ENCODE measurements at regions of chr12 and their contacts with region 1.

Region 1: GRCh38 chr12:116737774-116738700 is at the starts of genes RNFT2 and SPRING1:
- DNase-seq: peak; percentile 97
- ATAC-seq: peak; percentile 97
- H3K4me3 Mint-ChIP-seq: peak within 1 kb of the TSS; percentile 99
- H3K27ac Mint-ChIP-seq: peak within 1 kb of the TSS; percentile 90
- H3K4me1 Mint-ChIP-seq: peaks cover 31% of the 10 kb centered on the region
- H3K27me3 Mint-ChIP-seq: no peaks in the 10 kb centered on the region
- CTCF ChIP-seq: no peak
- total RNA-seq, gene RNFT2: 7.5 and 8.7 TPM in 2 replicates
- total RNA-seq, gene SPRING1: 31.6 and 36.4 TPM in 2 replicates

Region 2: DNA sequence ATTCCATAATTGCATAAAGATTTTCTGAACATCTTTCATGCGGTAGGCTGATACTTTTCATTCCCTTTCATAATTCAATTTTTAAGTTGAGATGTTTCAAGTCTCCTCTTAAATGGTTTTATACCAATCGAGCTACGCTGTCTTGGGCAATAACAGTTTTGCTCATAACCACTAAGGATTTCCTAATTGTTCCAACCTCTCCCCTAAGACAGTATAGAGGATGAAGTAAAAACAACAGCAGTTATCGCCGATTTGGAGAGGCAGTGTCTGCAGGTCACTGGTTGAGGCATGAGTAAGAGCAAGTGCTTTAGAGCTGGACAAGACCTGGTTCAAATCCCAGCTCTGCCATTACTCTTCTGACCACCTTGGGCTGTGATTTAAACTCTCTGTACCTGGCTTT is 453.6 kb before region 1 on chr12:
- CTCF ChIA-PET with region 1: no interaction called
- POLR2A ChIA-PET with region 1: no interaction called
- intact Hi-C with region 1: no loop called
- DNase-seq: no peak
- ATAC-seq: no peak
- H3K4me3 Mint-ChIP-seq: no peak overlapping the region
- H3K27ac Mint-ChIP-seq: no peak overlapping the region
- H3K4me1 Mint-ChIP-seq: peaks cover 19% of the 10 kb centered on the region
- H3K27me3 Mint-ChIP-seq: no peaks in the 10 kb centered on the region
- CTCF ChIP-seq: no peak

Region 3: DNA sequence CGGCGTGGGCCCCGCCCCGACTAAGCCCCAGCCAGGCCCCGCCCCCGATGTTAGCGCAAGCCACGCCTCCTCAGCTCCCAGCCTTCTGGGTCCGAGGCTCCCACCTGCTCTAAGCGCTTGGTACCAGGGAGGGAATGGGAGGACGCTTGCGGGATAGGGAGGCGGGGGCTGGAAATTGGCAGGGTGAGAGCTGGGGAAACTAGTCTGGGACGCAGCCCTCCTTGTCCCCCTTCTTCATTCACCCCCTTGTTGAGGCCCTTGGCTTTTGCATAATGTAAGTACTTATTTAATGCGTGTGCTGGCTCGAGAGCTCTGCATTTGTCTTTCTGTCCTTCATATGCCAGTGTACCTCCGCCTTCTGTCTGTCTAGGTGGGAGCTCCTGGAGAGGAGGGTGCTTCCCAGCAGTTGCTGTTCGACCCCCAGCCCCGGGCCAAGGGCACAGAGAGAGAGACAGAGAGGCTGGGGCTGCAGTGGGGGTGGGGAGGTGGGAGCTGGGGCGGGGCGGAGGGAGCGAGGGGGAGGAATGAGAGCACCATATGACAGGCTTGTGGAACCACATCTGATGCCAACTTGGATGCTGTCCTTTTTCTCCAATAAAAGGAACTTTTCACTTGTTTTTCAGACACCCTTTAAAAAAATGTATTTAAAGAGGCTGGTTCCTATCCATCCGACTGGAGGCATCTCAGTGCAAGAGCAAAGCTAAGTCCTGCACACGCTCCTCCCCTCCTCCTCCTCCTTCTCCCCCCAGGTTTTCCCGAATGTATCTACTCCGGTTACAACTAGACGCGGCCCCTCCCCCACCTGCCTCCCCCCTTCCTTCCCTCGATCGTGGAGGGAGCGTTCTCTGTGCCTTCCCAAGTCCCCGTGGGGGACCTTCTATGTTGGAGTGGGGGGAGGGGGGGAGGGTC is 204.4 kb before region 1 on chr12:
- CTCF ChIA-PET with region 1: no interaction called
- POLR2A ChIA-PET with region 1: no interaction called
- intact Hi-C with region 1: loop called (anchors 2 kb)
- DNase-seq: peak; percentile 82
- ATAC-seq: peak; percentile 88
- H3K4me3 Mint-ChIP-seq: peak overlapping the region; percentile 96
- H3K27ac Mint-ChIP-seq: peak overlapping the region; percentile 68
- H3K4me1 Mint-ChIP-seq: peaks cover 53% of the 10 kb centered on the region
- H3K27me3 Mint-ChIP-seq: no peaks in the 10 kb centered on the region
- CTCF ChIP-seq: no peak

Region 4: DNA sequence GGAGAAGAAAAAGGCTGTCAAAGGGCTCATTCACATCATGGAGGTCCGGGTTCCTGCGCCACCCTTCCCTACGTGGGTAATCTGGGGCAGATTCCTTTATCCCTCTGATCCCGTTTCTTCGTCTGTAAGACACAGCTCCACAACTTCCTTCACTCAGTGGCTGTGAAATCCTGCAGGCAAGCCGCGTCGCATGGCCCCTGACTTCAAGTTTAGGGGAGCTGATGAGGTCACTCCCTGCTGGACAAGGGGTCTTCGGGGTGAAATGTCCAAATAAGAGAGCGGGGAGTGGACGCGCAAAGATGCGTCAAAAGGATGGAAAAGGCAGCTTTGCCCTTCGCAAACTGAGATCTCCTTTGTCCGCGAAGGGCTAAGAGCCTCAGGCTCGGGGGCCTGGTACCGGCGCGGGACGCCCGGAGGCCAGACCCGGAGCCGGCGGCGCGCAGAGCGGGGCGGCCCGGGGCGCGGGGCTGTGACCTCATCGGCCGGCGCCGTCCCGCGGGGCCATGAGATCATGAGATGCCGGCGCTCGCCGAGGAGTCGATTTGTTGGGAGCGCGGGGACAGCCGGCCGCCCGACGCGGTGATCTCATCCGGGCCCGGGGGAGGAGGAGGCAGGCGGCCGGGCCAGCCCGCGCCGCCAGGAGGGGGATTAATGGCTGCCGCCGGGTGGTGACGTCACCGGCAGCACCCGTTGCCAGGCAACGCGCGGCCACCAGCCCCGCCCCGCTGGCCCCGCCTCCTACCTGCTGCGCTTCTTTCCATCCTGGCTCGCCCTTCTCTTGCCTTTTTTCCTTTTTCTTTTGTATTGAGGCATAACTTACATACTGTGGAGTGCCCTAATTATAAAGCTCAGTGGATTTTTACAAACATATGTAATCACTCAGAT is 81.2 kb after region 1 on chr12:
- CTCF ChIA-PET with region 1: no interaction called
- POLR2A ChIA-PET with region 1: no interaction called
- intact Hi-C with region 1: loop called (anchors 1 kb)
- DNase-seq: peak; percentile 88
- ATAC-seq: peak; percentile 85
- H3K4me3 Mint-ChIP-seq: peak overlapping the region; percentile 94
- H3K27ac Mint-ChIP-seq: peak overlapping the region; percentile 93
- H3K4me1 Mint-ChIP-seq: peaks cover 56% of the 10 kb centered on the region
- H3K27me3 Mint-ChIP-seq: no peaks in the 10 kb centered on the region
- CTCF ChIP-seq: no peak

Region 5: DNA sequence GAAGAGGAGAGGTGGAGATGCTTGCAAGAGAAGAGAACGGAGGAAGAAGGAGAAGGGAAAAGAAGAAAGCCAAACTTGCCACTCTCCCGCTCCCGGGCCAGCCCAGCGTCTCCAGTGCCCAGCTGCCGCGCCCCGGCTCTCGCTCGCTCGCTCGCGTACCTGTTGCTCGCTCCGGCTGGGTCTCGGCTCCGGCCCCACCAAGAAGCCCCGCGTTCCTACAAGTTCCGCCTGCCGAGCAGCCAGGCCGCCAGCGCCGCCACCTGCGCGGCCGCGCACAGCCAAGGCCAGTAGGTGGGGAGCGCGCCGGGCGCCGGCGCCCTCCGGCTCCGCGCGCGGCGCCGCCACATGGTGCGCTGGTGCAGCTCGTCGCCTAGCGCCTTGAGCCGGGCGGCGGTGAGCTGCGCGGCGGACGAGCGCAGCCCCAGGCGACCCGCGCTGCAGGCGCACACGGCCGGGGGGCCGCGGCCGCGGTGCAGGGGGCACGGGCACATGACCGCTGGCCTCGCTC is 142.8 kb after region 1 on chr12:
- CTCF ChIA-PET with region 1: no interaction called
- POLR2A ChIA-PET with region 1: no interaction called
- intact Hi-C with region 1: loop called (anchors 1 kb)
- DNase-seq: peak; percentile 53
- ATAC-seq: peak; percentile 80
- H3K4me3 Mint-ChIP-seq: peak overlapping the region; percentile 85
- H3K27ac Mint-ChIP-seq: peak overlapping the region; percentile 77
- H3K4me1 Mint-ChIP-seq: peaks cover 45% of the 10 kb centered on the region
- H3K27me3 Mint-ChIP-seq: peaks cover 35% of the 10 kb centered on the region
- CTCF ChIP-seq: no peak

Region 6: DNA sequence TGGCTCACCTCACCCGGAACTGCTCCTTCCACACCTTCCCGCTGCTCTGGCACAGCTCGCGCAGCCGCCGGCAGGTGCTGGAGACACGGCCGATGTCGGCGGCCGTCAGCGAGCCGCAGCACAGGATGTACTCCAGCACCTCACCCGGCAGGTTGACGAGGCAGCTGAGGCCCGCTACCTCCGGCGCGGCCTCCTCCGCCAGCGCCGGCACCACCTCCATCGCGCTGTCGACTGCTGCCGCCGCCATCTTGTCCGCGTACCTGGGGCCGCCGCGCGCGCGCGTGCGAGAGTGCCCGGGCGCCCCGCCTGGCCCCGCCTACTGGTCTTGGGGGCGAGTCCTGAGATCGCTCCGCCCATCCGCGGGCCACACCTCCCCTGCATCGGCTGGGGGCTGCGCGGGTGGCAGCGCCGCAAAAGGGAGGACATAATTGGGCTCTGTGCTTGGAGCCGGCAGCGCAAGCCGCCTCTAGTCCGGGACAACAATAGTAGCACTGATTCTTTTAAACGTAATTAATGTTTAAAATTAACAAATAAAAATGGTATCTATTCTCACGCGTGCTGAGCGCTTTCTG is 452.3 kb after region 1 on chr12 and contains the start of gene FBXO21:
- CTCF ChIA-PET with region 1: no interaction called
- POLR2A ChIA-PET with region 1: no interaction called
- intact Hi-C with region 1: loop called (anchors 5 kb)
- DNase-seq: peak; percentile 96
- ATAC-seq: peak; percentile 96
- H3K4me3 Mint-ChIP-seq: peak within 1 kb of the TSS; percentile 93
- H3K27ac Mint-ChIP-seq: peak within 1 kb of the TSS; percentile 90
- H3K4me1 Mint-ChIP-seq: peaks cover 29% of the 10 kb centered on the region
- H3K27me3 Mint-ChIP-seq: no peaks in the 10 kb centered on the region
- CTCF ChIP-seq: no peak
- total RNA-seq, gene FBXO21: 35.9 and 41.5 TPM in 2 replicates